GM18951 (cell line): ENCODE measurements at regions of chr1 and their contacts with region 1.

Region 1: GRCh38 chr1:175033953-175034352 is 10.7 kb upstream of the MRPS14 start:
- POLR2A ChIP-seq: no peak

Region 2: GRCh38 chr1:174142836-174143235 is 891.1 kb before region 1 on chr1:
- in situ Hi-C with region 1: no loop called
- POLR2A ChIP-seq: no peak

Region 3: GRCh38 chr1:174364996-174365736 is 668.8 kb before region 1 on chr1:
- in situ Hi-C with region 1: no loop called
- POLR2A ChIP-seq: no peak

Region 4: GRCh38 chr1:174892016-174892415 is 141.9 kb before region 1 on chr1:
- in situ Hi-C with region 1: no loop called
- POLR2A ChIP-seq: no peak

Region 5: GRCh38 chr1:175138579-175138978 is 104.6 kb after region 1 on chr1:
- in situ Hi-C with region 1: loop called (anchors 5 kb)
- POLR2A ChIP-seq: no peak